HepG2 (cell line): ENCODE measurements at regions of chr16 and their contacts with region 1.

Region 1: DNA sequence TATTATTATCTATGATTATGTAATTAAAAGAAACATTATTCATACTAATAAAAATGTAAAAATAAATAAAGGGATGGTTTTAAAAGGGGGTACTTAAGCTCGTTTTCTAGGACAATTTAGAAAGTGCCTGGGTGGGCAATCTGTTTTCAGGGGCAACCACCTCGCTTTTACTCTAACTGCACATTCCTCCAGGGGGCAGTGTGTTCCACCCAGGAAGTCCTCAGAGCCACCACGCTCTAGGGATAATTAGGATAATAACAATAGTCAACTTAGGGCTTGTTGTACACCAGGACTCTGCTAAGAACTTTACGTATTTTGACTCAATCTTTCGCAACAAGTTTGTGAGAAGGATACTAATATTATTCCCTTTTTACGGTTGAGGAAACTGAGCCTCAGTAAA is 396.7 kb upstream of the MAF start:
- DNase-seq: peak; percentile 19
- ATAC-seq: peak; percentile 69; the same call in 2 of the 3 replicates
- H3K4me3 ChIP-seq: no peak overlapping the region
- H3K27ac ChIP-seq: no peak overlapping the region
- H3K4me1 ChIP-seq: no peaks in the 10 kb centered on the region
- H3K27me3 ChIP-seq: no peaks in the 10 kb centered on the region; a peak in 1 of 5 replicates
- CTCF ChIP-seq: peak; percentile 56
- EP300 ChIP-seq: no peak
- POLR2A ChIP-seq: no peak
- RAD21 ChIP-seq: peak; percentile 29; the same call in 1 of the 2 replicates

Region 2: GRCh38 chr16:79982361-79982760 is 14.9 kb before region 1 on chr16:
- CTCF ChIA-PET with region 1: no interaction called
- POLR2A ChIA-PET with region 1: no interaction called
- in situ Hi-C with region 1: no loop called
- intact Hi-C with region 1: no loop called
- DNase-seq: no peak
- ATAC-seq: no peak
- H3K4me3 ChIP-seq: no peak overlapping the region
- H3K27ac ChIP-seq: no peak overlapping the region
- H3K4me1 ChIP-seq: no peaks in the 10 kb centered on the region
- H3K27me3 ChIP-seq: no peaks in the 10 kb centered on the region
- CTCF ChIP-seq: no peak
- EP300 ChIP-seq: no peak
- POLR2A ChIP-seq: no peak
- RAD21 ChIP-seq: no peak

Region 3: DNA sequence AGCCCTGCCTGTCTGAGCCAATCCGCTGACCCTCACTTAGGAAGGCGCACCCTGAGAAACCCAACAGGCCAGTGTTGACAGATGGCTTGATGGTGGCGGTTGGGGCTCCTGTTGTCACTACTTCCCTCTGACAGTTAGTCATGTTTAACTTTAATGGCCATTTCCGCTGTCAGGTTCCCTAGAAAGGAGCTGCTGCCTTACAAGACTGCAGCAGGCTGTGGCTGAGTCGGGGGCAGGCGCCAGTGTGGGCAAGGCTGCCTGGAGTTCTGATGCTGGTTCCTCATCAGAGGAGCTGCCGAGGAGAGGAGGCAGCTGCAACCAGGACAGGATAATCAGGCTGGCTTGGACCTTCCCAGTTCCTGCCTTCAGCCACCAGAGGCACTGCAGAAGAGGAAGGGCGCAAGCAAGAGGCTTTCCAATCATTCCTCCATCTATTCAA is 320.4 kb after region 1 on chr16:
- CTCF ChIA-PET with region 1: no interaction called
- POLR2A ChIA-PET with region 1: no interaction called
- in situ Hi-C with region 1: no loop called
- intact Hi-C with region 1: loop called (anchors 1 kb)
- DNase-seq: peak; percentile 16
- ATAC-seq: peak; percentile 95
- H3K4me3 ChIP-seq: no peak overlapping the region
- H3K27ac ChIP-seq: no peak overlapping the region
- H3K4me1 ChIP-seq: no peaks in the 10 kb centered on the region
- H3K27me3 ChIP-seq: 0 out of 5 replicates have a peak, but pooled peaks cover 0 to 3% of the 10 kb centered on the region in 2 experiments
- CTCF ChIP-seq: peak; percentile 33; the same call in 1 of the 2 replicates
- EP300 ChIP-seq: no peak
- POLR2A ChIP-seq: no peak
- RAD21 ChIP-seq: no peak

Region 4: GRCh38 chr16:80526425-80527061 is 529.3 kb after region 1 on chr16:
- CTCF ChIA-PET with region 1: no interaction called
- POLR2A ChIA-PET with region 1: no interaction called
- in situ Hi-C with region 1: no loop called
- intact Hi-C with region 1: loop called (anchors 1 kb)
- DNase-seq: peak; percentile 60
- ATAC-seq: peak; percentile 68
- H3K4me3 ChIP-seq: no peak overlapping the region
- H3K27ac ChIP-seq: no peak overlapping the region
- H3K4me1 ChIP-seq: no peaks in the 10 kb centered on the region
- H3K27me3 ChIP-seq: no peaks in the 10 kb centered on the region
- CTCF ChIP-seq: peak; percentile 84
- EP300 ChIP-seq: no peak
- POLR2A ChIP-seq: no peak
- RAD21 ChIP-seq: 0 out of 2 replicates have a peak, but pooled peaks have one; percentile 14